Naive thymus-derived CD4-positive, alpha-beta T cell (primary cell): ENCODE measurements at regions of chr9 and their contacts with region 1.

Region 1: DNA sequence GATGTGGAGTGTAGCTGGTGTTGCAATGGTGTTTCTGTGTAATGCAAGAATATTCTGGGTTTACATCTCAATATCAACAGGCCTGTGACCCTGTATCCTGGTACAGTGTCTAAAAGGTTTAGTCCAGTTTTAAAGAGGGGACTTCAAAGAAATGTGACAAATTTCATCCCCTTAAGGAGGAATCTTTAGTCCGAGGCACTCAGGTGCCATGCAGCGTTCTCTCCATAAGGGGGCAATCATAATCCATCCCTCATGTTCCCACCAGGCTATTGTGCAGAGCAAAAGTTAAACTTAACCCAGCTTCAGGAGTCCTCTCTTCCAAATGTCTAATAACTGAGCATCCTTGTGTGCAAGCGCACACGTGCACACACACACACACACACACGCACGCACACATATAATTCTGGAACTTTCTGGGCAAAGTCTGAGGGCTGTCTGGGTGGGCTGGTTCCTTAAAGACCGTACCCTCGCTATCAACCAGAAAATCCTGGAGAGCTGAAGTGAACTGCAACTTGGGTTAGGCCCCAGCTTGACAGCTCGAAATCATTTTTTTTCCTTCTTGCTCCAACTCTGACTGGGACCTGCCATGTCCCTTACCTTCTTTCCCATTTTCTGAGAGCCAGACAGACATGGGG is 46.0 kb downstream of the CRB2 start:
- DNase-seq: no peak
- ATAC-seq: no peak
- H3K4me3 ChIP-seq: no peak overlapping the region
- H3K4me3 Mint-ChIP-seq: no peak overlapping the region
- H3K27ac ChIP-seq: no peak overlapping the region
- H3K27ac Mint-ChIP-seq: no peak overlapping the region
- H3K4me1 ChIP-seq: peaks cover 0 to 3% of the 10 kb centered on the region in 2 donors
- H3K4me1 Mint-ChIP-seq: peaks cover 0 to 11% (median 10%) of the 10 kb centered on the region in 7 donors
- H3K27me3 ChIP-seq: no peaks in the 10 kb centered on the region
- H3K27me3 Mint-ChIP-seq: no peaks in the 10 kb centered on the region

Region 2: GRCh38 chr9:124040935-124041816 is 639.2 kb after region 1 on chr9:
- CTCF ChIA-PET with region 1: no interaction called
- POLR2A ChIA-PET with region 1: no interaction called
- intact Hi-C with region 1: loop called in 1 of 2 experiments (anchors 5 kb)
- DNase-seq: peak in 7 of 9 donors; percentile 16 to 69 (median 38)
- ATAC-seq: peak; percentile 69
- H3K4me3 ChIP-seq: no peak overlapping the region
- H3K4me3 Mint-ChIP-seq: peak overlapping the region in 7 of 10 donors; percentile 48 to 77 (median 57)
- H3K27ac ChIP-seq: no peak overlapping the region
- H3K27ac Mint-ChIP-seq: no peak overlapping the region
- H3K4me1 ChIP-seq: peaks cover 0 to 5% of the 10 kb centered on the region in 2 donors
- H3K4me1 Mint-ChIP-seq: peaks cover 0 to 25% (median 8%) of the 10 kb centered on the region in 7 donors
- H3K27me3 ChIP-seq: peaks cover 0 to 8% of the 10 kb centered on the region in 2 donors
- H3K27me3 Mint-ChIP-seq: peaks cover 61 to 82% (median 70%) of the 10 kb centered on the region in 5 donors

Region 3: GRCh38 chr9:124537926-124538325 is 1135.9 kb after region 1 on chr9:
- CTCF ChIA-PET with region 1: no interaction called
- POLR2A ChIA-PET with region 1: no interaction called
- intact Hi-C with region 1: loop called in 1 of 2 experiments (anchors 5 kb)
- DNase-seq: no peak
- ATAC-seq: no peak
- H3K4me3 ChIP-seq: no peak overlapping the region
- H3K4me3 Mint-ChIP-seq: no peak overlapping the region
- H3K27ac ChIP-seq: no peak overlapping the region
- H3K27ac Mint-ChIP-seq: no peak overlapping the region
- H3K4me1 ChIP-seq: no peaks in the 10 kb centered on the region
- H3K4me1 Mint-ChIP-seq: no peaks in the 10 kb centered on the region
- H3K27me3 ChIP-seq: no peaks in the 10 kb centered on the region
- H3K27me3 Mint-ChIP-seq: peaks cover 0 to 17% (median 8%) of the 10 kb centered on the region in 5 donors